HAP-1 (cell line): ENCODE measurements at regions of chr12 and their contacts with region 1.

Region 1: GRCh38 chr12:114403011-114403689 is 2.8 kb downstream of the TBX5 start:
- DNase-seq: peak; percentile 75 to 88
- H3K4me3 ChIP-seq: peak overlapping the region; percentile 63
- H3K4me1 ChIP-seq: peaks cover 3% of the 10 kb centered on the region
- H3K27me3 ChIP-seq: no peaks in the 10 kb centered on the region

Region 2: DNA sequence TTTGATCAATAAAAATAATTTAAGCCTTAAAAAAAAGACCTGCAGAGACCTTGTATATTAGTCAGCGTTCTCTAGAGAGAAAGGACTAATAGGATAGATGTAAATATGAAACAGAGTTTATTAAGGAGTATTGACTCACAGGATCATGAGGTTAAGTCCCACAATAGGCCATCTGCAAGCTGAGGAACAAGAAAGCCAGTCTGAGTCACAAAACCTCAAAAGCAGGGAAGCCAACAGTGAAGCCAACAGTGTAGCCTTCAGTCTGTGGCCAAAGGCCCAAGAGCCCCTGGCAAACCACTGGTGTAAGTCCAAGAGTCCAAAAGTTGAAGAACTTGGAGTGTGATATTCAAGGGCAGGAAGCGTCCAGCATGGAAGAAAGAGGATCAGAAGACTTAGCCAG is 63.5 kb before region 1 on chr12:
- in situ Hi-C with region 1: no loop called
- DNase-seq: no peak
- H3K4me3 ChIP-seq: no peak overlapping the region
- H3K4me1 ChIP-seq: no peaks in the 10 kb centered on the region
- H3K27me3 ChIP-seq: peaks cover 10% of the 10 kb centered on the region; the same call in 1 of the 2 replicates

Region 3: DNA sequence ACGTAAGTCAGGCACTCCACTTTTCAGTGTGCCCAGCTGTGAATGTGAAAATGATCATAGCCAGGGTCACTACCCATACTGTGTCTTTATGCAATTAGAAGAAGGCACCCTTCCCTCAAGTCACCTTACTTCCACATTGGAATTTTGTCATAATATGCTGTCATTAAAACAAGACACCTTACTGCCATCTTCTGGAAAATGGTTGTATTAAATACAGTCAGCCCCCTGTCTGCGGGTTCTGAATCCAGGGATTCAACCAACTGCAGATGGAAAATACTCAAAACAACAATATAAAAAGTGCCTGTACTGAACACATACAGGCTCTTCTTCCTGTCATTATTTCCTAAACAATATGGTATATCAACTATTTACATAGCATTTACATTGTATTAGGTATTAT is 73.0 kb after region 1 on chr12:
- in situ Hi-C with region 1: loop called (anchors 5 kb)
- DNase-seq: peak; percentile 23 to 82
- H3K4me3 ChIP-seq: no peak overlapping the region
- H3K4me1 ChIP-seq: peaks cover 4% of the 10 kb centered on the region
- H3K27me3 ChIP-seq: peaks cover 32% of the 10 kb centered on the region

Region 4: DNA sequence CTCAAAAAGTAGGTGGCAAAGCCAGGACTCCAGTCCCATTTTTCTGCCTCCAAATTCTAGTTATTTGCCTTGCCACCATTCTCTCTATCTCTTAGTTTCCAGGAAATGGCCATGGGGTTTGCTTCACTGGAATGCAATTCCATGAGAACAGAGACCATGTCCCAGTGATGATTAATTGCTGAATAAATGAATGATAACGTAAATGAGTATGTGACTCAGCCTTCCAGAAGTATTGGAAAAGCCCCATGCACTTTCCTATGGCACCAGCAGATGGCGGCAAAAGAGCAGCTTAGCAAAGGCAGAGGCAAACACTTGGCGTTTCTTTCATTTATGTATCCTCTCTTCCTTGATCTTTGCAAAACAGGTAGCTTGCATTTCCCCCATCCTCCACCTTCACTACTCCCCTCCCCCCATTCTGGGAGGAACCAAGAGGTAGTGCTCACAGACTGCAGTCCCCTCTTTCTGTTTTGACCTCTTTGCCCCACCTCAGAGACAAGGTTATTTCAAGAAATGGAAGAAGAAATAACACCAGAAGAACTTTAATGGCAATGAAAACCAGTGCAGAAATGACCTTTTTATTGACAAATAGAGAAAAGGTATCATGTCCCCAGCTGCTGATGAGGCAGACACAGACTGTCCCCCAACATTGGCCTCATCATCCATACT is 259.5 kb after region 1 on chr12:
- in situ Hi-C with region 1: no loop called
- DNase-seq: peak; percentile 66 to 86
- H3K4me3 ChIP-seq: no peak overlapping the region
- H3K4me1 ChIP-seq: peaks cover 6% of the 10 kb centered on the region
- H3K27me3 ChIP-seq: no peaks in the 10 kb centered on the region